Activated naive CD4-positive, alpha-beta T cell treated with anti-CD3 and anti-CD28 coated beads for 36 hours (primary cell): ENCODE measurements at regions of chr11 and their contacts with region 1.

Region 1: DNA sequence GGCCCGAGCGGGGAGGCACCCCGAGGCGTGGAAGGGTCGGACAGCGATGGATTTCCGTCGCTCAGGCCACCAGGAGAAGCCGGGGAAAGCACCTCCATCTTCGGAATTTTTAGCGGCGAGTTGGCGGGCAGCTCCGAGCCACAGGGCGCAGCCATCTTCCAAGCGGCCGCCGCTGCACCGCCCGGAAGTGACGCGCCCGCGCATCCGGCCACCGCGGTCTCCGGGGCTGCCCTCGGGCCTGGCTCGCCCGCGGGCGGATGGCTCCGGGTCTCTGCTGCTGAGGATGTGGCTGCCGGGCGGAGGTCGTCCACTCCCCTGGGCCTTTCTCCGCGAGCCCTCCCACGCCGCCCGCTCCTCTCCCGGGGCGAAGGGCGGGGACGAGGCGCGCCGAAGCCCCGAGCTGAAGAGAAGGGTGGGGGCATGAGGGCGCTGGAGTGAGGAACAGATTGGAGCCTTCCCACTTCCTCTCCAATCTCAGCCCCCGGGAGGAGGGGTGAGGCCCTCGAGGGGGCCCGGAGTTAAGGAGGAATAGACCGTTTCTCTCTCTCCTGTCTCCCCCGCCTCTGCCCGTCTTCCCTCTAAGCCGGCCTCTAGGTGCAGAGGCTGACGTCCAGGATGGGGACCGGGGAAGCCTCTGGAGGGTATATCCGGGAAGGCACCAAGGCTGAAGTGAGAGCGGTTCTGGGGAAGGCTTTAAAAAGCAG is at the start of gene MSANTD2:
- DNase-seq: peak; percentile 82
- H3K4me3 Mint-ChIP-seq: peak within 1 kb of the TSS; percentile 85
- H3K27ac Mint-ChIP-seq: peak within 1 kb of the TSS; percentile 92
- H3K4me1 Mint-ChIP-seq: peaks cover 32% of the 10 kb centered on the region
- H3K27me3 Mint-ChIP-seq: no peaks in the 10 kb centered on the region
- total RNA-seq, gene MSANTD2: 3.8 to 4.2 TPM

Region 2: DNA sequence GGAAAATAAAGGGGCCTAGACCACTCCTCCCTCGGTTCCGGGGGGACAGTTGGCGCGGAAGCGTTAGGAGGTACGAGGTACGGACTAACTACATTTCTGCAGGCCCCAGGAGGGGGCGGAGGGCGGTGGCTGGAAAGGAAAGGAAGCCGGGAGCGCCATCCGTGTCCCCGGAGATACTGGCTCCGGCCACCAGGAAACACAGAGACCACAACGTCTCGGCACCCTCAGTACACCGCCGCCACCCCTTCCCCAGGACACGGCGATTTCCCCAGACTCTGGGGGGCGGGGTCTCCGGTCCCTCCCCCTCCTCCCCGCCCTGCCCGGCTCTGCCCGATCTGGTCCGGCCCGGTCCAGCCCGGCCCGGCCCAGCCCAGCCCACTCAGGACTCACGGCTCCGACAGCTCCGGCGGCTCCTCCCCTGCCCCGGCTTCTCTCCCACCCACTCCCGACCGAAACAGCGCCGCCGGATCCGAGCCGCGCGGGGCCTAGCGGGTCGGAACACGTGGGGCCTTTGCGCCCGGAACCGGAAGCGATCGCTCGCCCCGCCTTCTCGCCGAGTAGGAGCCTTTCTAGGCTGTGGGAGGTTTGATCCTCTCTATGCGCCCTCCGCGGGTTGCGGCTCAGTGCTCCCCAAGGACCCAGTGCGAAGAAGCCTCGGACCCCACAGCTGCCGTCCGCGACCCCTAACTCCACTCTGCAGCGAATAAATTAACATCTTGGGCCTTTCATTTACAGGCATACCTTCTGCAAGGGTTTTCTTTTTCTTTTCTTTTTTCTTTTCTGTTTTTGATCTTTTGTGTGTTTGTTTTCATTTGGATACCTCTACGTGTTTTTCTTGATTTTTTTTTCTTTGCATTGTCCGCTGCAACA is 1059.0 kb before region 1 on chr11 and contains the start of gene ZNF202:
- CTCF ChIA-PET with region 1: no interaction called
- intact Hi-C with region 1: loop called (anchors 2 kb)
- DNase-seq: peak; percentile 94
- H3K4me3 Mint-ChIP-seq: peak within 1 kb of the TSS; percentile 98
- H3K27ac Mint-ChIP-seq: peak within 1 kb of the TSS; percentile 92
- H3K4me1 Mint-ChIP-seq: peaks cover 40% of the 10 kb centered on the region
- H3K27me3 Mint-ChIP-seq: no peaks in the 10 kb centered on the region
- total RNA-seq, gene ZNF202: 5.9 to 6.4 TPM

Region 3: GRCh38 chr11:124739479-124740276 is 60.7 kb before region 1 on chr11 and contains the start of gene NRGN:
- CTCF ChIA-PET with region 1: interaction called, 3 read pairs
- intact Hi-C with region 1: loop called (anchors 1 kb)
- DNase-seq: peak; percentile 90
- H3K4me3 Mint-ChIP-seq: peak within 1 kb of the TSS; percentile 77
- H3K27ac Mint-ChIP-seq: no peak within 1 kb of the TSS
- H3K4me1 Mint-ChIP-seq: peaks cover 8% of the 10 kb centered on the region
- H3K27me3 Mint-ChIP-seq: peaks cover 2% of the 10 kb centered on the region
- total RNA-seq, gene NRGN: 10.3 to 10.8 TPM

Region 4: GRCh38 chr11:124758317-124759203 is 41.8 kb before region 1 on chr11:
- CTCF ChIA-PET with region 1: interaction called, 24 read pairs
- intact Hi-C with region 1: no loop called
- DNase-seq: peak; percentile 80
- H3K4me3 Mint-ChIP-seq: peak overlapping the region; percentile 56
- H3K27ac Mint-ChIP-seq: no peak overlapping the region
- H3K4me1 Mint-ChIP-seq: peaks cover 30% of the 10 kb centered on the region
- H3K27me3 Mint-ChIP-seq: peaks cover 45% of the 10 kb centered on the region

Region 5: DNA sequence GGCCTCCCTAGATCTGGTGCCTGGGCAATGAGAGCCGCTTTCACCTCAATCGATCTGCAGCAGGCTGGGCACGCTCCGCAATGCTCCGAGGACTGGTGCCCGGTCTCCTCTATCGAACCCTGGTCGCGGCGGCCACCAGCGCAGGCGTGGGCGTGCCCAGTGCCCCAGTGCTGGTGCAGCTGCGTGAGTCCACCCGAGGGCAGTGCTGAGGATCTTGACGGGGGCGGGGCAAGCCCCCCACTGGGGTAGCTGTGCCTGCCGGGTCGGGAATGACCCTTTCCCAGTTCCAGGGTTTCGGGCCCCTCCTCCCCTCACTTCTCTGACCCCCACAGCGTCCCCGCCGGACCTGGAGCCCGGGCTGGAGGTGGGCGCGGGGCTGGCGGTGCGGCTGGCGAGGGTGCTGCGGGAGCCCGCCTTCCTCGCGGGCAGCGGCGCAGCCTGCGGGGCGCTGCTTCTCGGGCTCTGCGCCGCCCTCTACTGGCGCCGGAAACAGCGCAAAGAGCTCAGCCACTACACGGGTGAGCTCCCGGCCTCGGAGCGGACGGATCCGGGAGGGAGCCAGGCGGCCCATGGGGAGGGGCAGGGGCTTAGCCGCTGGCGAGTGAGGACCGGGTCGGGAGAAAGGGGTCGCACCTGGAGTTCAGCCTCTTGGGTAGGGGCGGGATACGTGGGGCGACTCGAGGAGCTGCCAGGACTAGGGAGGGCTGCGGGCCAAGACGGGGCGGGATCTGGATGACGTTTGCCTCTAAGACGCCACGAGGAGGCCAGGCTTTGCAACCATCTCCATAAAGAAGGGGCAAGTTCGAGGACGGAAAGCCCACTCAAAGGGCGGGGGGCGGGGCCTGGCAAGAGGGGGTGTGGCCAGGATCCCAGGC is 75.8 kb after region 1 on chr11:
- CTCF ChIA-PET with region 1: interaction called, 6 read pairs
- intact Hi-C with region 1: loop called (anchors 1 kb)
- DNase-seq: peak; percentile 86
- H3K4me3 Mint-ChIP-seq: peak overlapping the region; percentile 83
- H3K27ac Mint-ChIP-seq: peak overlapping the region; percentile 73
- H3K4me1 Mint-ChIP-seq: peaks cover 19% of the 10 kb centered on the region
- H3K27me3 Mint-ChIP-seq: peaks cover 23% of the 10 kb centered on the region

Region 6: GRCh38 chr11:124953753-124954589 is 153.6 kb after region 1 on chr11 and contains the start of gene CCDC15:
- CTCF ChIA-PET with region 1: no interaction called
- intact Hi-C with region 1: loop called (anchors 5 kb)
- DNase-seq: peak; percentile 97
- H3K4me3 Mint-ChIP-seq: no peak within 1 kb of the TSS
- H3K27ac Mint-ChIP-seq: no peak within 1 kb of the TSS
- H3K4me1 Mint-ChIP-seq: peaks cover 7% of the 10 kb centered on the region
- H3K27me3 Mint-ChIP-seq: no peaks in the 10 kb centered on the region
- total RNA-seq, gene CCDC15: 6.1 to 7.3 TPM

Region 7: DNA sequence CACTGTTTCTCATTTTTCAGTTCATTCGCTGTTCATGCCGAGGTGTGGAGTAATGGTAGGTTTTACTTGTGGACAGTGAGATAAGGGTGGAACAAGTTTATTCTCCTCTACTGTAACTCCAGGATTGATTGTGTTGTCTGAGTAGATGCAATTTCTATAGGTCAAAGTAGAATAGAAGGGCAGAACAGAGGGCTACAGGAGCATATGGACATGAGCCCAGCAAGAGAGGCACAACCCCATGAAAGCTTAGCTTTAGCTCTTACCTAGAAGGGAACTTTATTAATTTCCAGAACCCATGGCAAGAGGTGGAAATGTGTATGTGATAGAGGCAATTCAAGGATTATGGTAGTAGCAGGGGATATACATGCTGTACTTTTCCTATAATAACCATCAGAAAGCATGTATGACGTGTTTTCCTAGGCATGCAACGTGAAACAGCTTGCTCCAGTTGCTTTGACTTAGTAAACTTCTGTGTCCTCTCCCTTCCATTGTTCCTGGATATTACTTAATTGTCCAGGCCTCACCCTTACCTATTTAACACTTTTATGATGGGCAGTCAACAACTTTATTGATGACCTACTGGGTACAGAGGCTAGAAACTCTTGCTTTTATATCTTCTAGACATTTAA is 248.9 kb after region 1 on chr11:
- CTCF ChIA-PET with region 1: no interaction called
- intact Hi-C with region 1: no loop called
- DNase-seq: no peak
- H3K4me3 Mint-ChIP-seq: no peak overlapping the region
- H3K27ac Mint-ChIP-seq: no peak overlapping the region
- H3K4me1 Mint-ChIP-seq: no peaks in the 10 kb centered on the region
- H3K27me3 Mint-ChIP-seq: no peaks in the 10 kb centered on the region